Breast epithelium (tissue), 4 donors: ENCODE measurements at regions of chr2 and their contacts with region 1.

Region 1: DNA sequence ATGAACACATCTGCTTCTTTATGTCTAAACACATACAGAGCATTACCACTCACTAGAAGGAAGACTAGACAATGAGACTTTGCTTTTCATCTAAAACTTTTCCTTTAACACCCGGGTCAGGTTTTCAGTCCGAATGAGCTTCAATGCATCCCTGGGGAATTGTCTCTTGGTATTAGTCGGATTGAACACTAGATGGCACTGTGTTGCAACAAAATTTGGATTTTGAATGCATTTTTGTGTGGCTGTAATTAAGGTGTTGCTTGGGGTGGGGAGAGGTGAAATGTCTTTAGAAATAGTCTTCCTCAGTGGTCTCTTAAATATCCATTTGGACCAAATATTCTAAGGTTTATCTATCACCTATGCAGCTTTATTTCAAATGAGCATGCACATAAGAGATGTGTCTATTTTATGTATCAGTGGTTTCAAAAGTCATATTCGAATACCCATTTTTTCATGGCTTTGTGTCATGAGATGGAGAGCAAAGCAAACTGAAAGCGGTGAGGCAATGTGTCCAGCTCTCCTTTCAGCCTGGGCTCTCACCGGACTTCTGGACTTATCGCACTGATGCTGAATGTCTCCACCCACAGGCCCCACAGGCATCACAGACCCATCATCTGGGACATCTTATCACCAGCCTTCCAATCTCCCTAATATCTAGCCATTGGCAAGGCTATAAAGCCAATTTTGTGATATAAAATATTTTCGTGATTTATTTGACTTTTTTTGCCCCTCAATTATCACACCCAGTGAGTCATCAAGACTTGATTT is 510.3 kb downstream of the RNF144A start:
- DNase-seq: no peak
- H3K4me3 ChIP-seq: no peak overlapping the region
- H3K27ac ChIP-seq: no peak overlapping the region
- H3K4me1 ChIP-seq: no peaks in the 10 kb centered on the region
- H3K27me3 ChIP-seq: no peaks in the 10 kb centered on the region
- CTCF ChIP-seq: peak; percentile 72 to 82 (median 76)
- POLR2A ChIP-seq: no peak

Region 2: GRCh38 chr2:7467782-7468447 is 40.4 kb after region 1 on chr2:
- intact Hi-C with region 1: loop called (anchors 2 kb)
- DNase-seq: no peak
- H3K4me3 ChIP-seq: no peak overlapping the region
- H3K27ac ChIP-seq: no peak overlapping the region
- H3K4me1 ChIP-seq: no peaks in the 10 kb centered on the region
- H3K27me3 ChIP-seq: no peaks in the 10 kb centered on the region
- CTCF ChIP-seq: no peak
- POLR2A ChIP-seq: no peak

Region 3: DNA sequence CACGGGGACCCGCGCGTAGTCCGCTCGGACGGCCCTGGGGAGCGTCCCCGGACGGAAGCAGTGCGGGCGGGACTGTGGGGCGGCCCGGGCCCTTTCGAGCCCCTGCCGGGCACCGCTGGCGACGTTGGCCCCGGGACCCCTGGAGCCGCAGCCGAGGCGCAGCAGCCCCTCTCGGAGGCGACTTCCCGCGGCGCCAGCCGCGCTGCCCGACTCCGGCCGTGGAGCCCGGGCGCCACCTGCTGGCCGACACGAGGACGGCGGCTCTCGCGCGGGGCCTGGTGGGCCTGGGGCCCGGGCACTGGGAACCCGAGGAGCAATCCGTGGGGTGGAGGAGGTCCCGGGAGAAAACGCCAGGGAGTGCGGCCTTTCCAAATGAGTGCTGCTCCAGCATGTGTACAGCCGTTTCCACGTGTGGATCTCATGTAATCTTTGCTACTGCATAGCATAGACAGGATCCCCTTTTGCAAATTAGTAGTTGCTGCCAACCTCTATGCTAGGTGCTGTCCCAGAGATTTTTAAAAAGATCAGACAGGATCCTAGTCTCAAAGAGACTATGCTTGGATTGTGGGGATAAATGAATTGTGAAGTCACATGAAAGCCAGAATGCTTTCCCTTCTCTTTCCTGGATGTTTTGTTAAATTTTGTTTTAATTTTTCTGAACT is 1258.4 kb after region 1 on chr2:
- intact Hi-C with region 1: loop called (anchors 5 kb)
- DNase-seq: peak; percentile 40 to 74
- H3K4me3 ChIP-seq: peak overlapping the region; percentile 85 to 87 (median 85)
- H3K27ac ChIP-seq: peak overlapping the region; percentile 89 to 90
- H3K4me1 ChIP-seq: peaks cover 0 to under 1% of the 10 kb centered on the region in 2 donors
- H3K27me3 ChIP-seq: no peaks in the 10 kb centered on the region
- CTCF ChIP-seq: peak; percentile 58 to 97 (median 59)
- POLR2A ChIP-seq: no peak